PC-3 (cell line): ENCODE measurements at regions of chr2 and their contacts with region 1.

Region 1: GRCh38 chr2:1550658-1551316 is 137.5 kb downstream of the TPO start:
- DNase-seq: peak; percentile 73
- ATAC-seq: peak; percentile 87
- H3K4me3 ChIP-seq: no peak overlapping the region
- H3K27ac ChIP-seq: no peak overlapping the region
- H3K4me1 ChIP-seq: peaks cover 24% of the 10 kb centered on the region
- H3K27me3 ChIP-seq: no peaks in the 10 kb centered on the region
- CTCF ChIP-seq: peak; percentile 94

Region 2: DNA sequence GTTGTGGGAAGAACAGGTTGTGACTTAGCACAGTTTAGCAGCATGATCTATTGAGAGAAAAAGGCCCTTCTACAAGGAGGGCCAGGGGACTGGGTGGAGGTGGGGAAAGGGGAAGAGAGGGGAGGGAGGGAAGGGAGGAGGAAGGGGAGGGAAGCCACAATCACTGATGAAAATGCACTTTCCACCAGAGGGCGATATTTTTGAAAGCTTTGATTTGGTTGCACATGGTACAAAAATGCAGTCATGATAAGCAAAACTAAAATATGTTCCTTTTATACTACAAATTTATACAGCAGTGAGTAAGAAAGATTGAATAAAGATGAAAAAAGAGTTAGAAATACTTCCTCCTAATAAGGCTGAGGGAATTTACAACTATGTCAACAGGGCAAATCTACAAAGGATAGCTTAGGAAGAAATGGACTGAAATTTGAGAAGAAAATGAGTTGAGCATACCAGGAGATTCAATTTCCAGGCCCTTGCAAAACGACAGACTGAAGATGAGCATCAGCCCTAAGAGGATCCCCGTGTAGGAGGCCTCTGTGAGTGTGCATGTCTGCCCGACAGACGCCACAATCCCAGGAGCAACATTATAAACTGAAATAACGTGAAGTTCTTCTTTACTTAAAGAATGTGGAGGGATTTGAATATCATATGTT is 1304.2 kb before region 1 on chr2:
- CTCF ChIA-PET with region 1: no interaction called
- POLR2A ChIA-PET with region 1: no interaction called
- intact Hi-C with region 1: loop called (anchors 5 kb)
- DNase-seq: peak; percentile 79
- ATAC-seq: peak; percentile 77
- H3K4me3 ChIP-seq: no peak overlapping the region
- H3K27ac ChIP-seq: no peak overlapping the region
- H3K4me1 ChIP-seq: no peaks in the 10 kb centered on the region
- H3K27me3 ChIP-seq: no peaks in the 10 kb centered on the region
- CTCF ChIP-seq: peak; percentile 72

Region 3: GRCh38 chr2:636641-637405 is 914.0 kb before region 1 on chr2:
- CTCF ChIA-PET with region 1: no interaction called
- POLR2A ChIA-PET with region 1: no interaction called
- intact Hi-C with region 1: loop called (anchors 5 kb)
- DNase-seq: peak; percentile 84
- ATAC-seq: peak; percentile 37
- H3K4me3 ChIP-seq: no peak overlapping the region
- H3K27ac ChIP-seq: peak overlapping the region; percentile 70
- H3K4me1 ChIP-seq: peaks cover 24% of the 10 kb centered on the region
- H3K27me3 ChIP-seq: no peaks in the 10 kb centered on the region
- CTCF ChIP-seq: peak; percentile 90

Region 4: DNA sequence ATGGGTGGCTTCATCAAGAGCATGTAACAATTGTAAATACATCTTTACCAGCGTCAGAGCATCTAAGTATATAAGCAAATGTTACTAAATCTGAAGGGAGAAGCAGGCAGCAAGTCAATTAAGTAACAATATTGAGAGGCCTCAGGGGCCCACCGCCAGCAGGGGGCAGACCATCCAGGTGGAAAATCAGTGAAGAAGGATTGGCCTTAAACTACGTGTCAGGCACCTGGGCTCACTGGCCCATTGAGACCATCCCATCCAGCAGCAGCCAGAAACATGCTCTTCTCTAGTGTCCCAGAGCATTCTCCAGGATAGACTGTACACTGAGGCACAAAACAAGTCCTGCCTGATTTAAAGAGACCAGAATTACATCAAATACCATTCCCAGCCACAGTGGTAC is 696.3 kb before region 1 on chr2:
- CTCF ChIA-PET with region 1: no interaction called
- POLR2A ChIA-PET with region 1: no interaction called
- intact Hi-C with region 1: loop called (anchors 1 kb)
- DNase-seq: peak; percentile 53
- ATAC-seq: peak; percentile 42; the same call in 1 of the 2 replicates
- H3K4me3 ChIP-seq: no peak overlapping the region
- H3K27ac ChIP-seq: no peak overlapping the region
- H3K4me1 ChIP-seq: no peaks in the 10 kb centered on the region
- H3K27me3 ChIP-seq: peaks cover 11% of the 10 kb centered on the region; the same call in 1 of the 2 replicates
- CTCF ChIP-seq: peak; percentile 80

Region 5: GRCh38 chr2:1246239-1246638 is 304.5 kb before region 1 on chr2:
- CTCF ChIA-PET with region 1: no interaction called
- POLR2A ChIA-PET with region 1: no interaction called
- intact Hi-C with region 1: loop called (anchors 10 kb)
- DNase-seq: no peak
- ATAC-seq: no peak
- H3K4me3 ChIP-seq: no peak overlapping the region
- H3K27ac ChIP-seq: no peak overlapping the region
- H3K4me1 ChIP-seq: no peaks in the 10 kb centered on the region
- H3K27me3 ChIP-seq: peaks cover 86% of the 10 kb centered on the region
- CTCF ChIP-seq: peak; percentile 43; the same call in 1 of the 2 replicates

Region 6: DNA sequence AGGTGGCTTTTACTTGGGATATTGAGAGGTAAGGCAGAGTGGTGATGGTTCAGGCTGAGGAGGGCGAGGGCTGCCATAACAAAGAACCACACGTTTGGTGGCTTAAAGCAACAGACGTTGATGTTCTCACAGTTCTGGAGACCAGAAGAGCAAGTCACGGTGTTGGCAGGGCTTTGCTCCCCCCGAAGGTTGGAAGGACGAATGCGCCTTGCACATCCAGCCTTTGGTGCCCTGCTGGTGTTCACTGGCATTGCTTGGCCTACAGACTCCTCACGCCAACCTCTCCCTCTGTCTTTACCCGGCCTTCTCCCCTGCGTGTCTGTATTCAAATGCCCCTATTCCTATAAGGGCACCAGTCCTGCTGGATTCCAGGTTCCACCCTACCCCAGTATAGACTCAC is 12.1 kb before region 1 on chr2:
- CTCF ChIA-PET with region 1: no interaction called
- POLR2A ChIA-PET with region 1: no interaction called
- intact Hi-C with region 1: no loop called
- DNase-seq: peak; percentile 62
- ATAC-seq: peak; percentile 91
- H3K4me3 ChIP-seq: no peak overlapping the region
- H3K27ac ChIP-seq: no peak overlapping the region
- H3K4me1 ChIP-seq: no peaks in the 10 kb centered on the region
- H3K27me3 ChIP-seq: no peaks in the 10 kb centered on the region
- CTCF ChIP-seq: peak; percentile 63

Region 7: GRCh38 chr2:1750933-1751766 is 200.4 kb after region 1 on chr2:
- CTCF ChIA-PET with region 1: no interaction called
- POLR2A ChIA-PET with region 1: no interaction called
- intact Hi-C with region 1: loop called (anchors 5 kb)
- DNase-seq: peak; percentile 86
- ATAC-seq: peak; percentile 91
- H3K4me3 ChIP-seq: no peak overlapping the region
- H3K27ac ChIP-seq: no peak overlapping the region
- H3K4me1 ChIP-seq: peaks cover 4% of the 10 kb centered on the region
- H3K27me3 ChIP-seq: no peaks in the 10 kb centered on the region
- CTCF ChIP-seq: peak; percentile 90

Region 8: DNA sequence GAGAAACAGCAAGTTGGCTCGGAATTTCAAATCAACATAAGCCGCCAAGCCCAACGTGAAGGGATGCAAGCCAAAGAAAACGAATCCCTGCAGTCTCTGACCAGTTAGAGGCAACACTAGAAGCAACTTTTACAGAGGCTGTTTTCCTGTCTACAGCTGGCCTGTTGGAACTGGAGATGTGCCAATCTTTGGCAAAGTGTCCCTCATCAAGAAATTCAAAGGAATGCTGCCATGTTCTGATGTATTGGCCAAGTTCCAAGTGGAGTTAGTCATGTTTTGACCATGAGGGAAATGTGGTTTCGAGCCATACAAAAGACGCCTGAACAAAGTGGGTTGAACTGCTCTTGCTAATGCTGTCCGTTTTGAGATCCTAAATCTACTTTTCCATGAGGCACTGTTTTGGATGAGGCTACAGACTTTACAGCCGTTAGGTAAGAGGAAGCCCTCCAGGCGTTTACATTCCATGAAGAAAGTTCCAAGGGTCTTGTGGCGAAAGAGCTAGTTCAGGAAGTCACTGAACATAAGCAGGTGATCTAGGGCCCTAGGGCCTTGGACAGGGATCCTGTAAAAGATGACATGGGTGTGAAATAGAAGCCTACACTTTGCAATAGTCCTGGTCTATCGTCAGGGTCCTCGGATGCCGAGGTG is 334.3 kb after region 1 on chr2:
- CTCF ChIA-PET with region 1: no interaction called
- POLR2A ChIA-PET with region 1: no interaction called
- intact Hi-C with region 1: no loop called
- DNase-seq: no peak
- ATAC-seq: no peak
- H3K4me3 ChIP-seq: no peak overlapping the region
- H3K27ac ChIP-seq: no peak overlapping the region
- H3K4me1 ChIP-seq: no peaks in the 10 kb centered on the region
- H3K27me3 ChIP-seq: peaks cover 73% of the 10 kb centered on the region
- CTCF ChIP-seq: no peak